Activated B cell treated with CpG ODN at 0.5 μM for 24 hours (primary cell): ENCODE measurements at regions of chr11 and their contacts with region 1.

Region 1: DNA sequence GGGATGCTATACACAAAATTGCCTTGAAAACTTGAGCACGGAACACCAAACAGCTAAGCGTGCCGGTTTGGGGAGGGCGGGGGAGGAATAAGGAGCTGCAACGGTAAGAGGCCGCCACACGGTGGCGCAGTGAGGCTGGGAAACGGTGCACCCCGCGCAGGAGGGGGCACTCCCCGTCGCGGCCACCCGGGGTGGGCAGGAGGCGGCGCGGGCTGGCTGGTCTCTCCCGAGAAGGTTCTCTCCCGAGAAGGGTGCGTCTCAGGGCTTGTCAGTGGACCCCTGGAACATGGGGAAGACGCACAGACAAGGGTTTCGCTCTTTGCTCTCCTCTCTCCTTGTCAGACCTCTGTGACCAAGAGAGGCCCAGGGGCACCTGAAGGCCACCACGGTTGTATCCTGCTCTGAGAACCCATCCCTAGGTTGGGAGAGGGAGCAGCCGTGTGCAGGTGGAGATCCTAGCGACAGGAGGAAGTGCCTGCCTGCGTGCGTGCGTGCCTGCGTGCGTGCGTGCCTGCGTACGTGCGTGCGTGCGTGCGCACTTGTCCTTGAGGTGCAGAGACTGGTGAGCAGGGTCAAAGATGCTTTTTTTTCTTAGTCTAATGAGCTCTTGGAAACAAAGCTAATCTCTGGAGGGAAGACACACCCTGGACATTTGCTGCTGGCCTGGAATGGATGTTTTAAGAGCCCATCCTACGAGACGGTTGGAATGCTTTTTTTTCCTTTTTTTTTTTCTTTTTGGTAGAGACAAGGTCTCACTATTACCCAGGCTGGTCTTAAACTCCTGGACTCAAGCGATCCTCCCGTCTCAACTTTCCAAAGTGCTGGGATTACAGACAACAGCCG is 18.1 kb upstream of the JAM3 start:
- DNase-seq: peak; percentile 66
- ATAC-seq: peak; percentile 97
- H3K4me3 Mint-ChIP-seq: no peak overlapping the region
- H3K27ac Mint-ChIP-seq: no peak overlapping the region
- H3K4me1 Mint-ChIP-seq: peaks cover 2% of the 10 kb centered on the region
- H3K27me3 Mint-ChIP-seq: peaks cover 37% of the 10 kb centered on the region
- CTCF ChIP-seq: peak; percentile 70

Region 2: DNA sequence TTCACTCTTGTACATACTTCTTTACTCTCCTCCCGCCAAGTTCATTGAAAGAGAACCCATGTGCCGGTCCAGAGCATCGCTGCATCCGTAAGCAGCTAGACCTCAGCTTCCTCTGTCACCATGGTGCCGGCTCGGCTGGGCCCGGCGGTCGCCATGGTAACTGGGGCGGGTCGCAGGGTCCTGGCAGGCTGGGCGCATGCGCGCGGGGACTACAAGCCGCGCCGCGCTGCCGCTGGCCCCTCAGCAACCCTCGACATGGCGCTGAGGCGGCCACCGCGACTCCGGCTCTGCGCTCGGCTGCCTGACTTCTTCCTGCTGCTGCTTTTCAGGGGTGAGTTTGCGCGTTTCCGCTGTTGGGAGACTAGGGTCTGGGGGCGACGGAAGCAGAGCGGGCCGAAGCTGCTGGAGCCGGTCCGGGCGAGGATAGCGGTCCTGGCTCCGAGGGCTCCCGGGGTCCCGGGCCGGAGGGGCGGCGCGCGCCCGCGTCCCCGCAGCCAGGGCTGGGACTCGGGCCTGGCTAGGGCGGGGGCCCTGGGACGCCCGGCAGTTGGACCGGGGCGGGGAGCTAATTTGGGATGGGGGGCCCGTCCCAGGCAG is 18.2 kb after region 1 on chr11 and contains the start of gene JAM3:
- CTCF ChIA-PET with region 1: interaction called, 13 read pairs
- POLR2A ChIA-PET with region 1: interaction called, 5 read pairs
- intact Hi-C with region 1: loop called (anchors 1 kb)
- DNase-seq: peak; percentile 99
- ATAC-seq: peak; percentile 88
- H3K4me3 Mint-ChIP-seq: peak within 1 kb of the TSS; percentile 95
- H3K27ac Mint-ChIP-seq: peak within 1 kb of the TSS; percentile 90
- H3K4me1 Mint-ChIP-seq: peaks cover 42% of the 10 kb centered on the region
- H3K27me3 Mint-ChIP-seq: peaks cover 11% of the 10 kb centered on the region
- CTCF ChIP-seq: no peak
- total RNA-seq, gene JAM3: 16.2 and 17.6 TPM in 2 replicates

Region 3: DNA sequence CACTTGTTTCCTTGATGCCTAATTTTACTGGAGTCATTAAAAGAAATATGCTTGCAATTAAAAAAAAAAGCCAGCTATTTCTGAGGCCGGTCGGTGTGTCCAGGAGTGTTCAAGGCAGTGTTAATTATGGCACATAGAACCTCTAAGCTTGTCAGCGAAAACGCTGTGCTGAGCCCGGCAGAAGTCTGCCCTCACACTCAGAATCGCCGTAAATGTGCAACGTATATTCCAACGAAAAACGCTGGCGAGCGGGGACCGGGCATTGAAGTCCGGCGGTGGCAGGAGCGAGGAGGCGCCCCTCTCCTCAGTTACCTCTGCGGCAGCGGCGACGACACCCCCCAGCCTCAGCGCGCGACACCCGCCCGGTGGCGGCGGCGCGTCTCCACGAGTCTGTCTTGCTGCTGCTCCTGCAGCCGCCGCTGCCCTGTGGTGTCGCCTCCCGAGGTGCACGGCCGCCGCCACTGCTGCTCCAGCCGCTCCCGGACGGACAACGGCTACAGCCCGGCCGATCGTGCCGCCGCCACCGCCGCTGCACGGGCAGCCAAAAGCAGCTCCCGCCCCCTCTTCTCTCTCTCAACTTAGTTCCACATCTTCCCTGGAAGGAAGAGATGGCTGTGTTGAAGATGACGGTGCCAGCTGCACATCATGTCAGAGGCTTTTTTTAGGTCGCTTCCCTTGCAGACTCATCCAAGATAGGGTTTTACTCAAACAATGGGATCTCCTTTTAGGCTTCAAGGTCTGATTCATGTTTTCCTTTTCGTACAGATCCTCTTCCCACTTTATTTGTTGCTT is 74.1 kb after region 1 on chr11:
- CTCF ChIA-PET with region 1: interaction called, 4 read pairs
- POLR2A ChIA-PET with region 1: no interaction called
- intact Hi-C with region 1: loop called (anchors 1 kb)
- DNase-seq: no peak
- ATAC-seq: no peak
- H3K4me3 Mint-ChIP-seq: no peak overlapping the region
- H3K27ac Mint-ChIP-seq: no peak overlapping the region
- H3K4me1 Mint-ChIP-seq: peaks cover 20% of the 10 kb centered on the region
- H3K27me3 Mint-ChIP-seq: peaks cover 17% of the 10 kb centered on the region
- CTCF ChIP-seq: no peak

Region 4: DNA sequence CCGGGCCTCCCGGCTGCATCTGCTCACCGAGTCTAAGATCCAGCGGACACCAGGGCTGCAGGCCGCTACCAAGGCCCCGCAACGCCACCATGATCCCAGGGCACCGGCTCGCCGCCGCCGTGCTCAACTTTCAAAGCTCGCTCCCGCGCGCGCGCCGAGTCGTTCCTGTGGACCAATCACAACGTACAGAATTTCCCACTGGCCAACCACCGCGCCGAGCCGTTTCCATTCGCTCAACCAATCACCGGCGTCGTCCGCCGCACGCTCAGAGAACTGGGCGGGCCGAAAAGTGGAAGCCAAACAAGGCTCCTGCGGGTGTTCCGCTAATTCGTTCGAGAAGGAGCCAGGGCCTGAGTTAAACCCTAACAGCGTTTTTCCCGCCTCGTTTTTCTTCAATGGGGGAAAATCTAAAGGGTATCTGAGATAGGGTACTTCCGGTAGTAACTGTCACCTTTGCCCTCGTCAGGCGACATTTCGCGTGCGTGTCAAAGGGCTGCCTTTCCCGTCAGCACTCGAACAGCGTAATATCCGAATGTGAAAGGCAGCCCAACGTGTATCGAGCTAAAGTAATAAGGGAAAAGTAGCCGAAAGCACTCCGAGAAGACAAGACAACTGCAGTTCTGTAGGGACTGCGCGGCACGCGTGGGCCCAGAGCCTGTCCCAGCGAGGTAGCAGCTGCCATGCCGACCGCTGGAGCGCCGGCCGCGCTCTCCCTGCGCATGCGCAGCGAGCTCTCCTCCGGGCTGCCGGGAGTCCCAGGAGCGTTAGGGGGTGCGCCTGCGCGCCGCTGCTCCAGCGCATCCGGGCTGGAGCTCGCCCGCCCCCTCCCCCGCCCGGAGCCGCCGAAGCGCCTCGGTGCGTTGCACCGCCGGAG is 173.3 kb after region 1 on chr11 and contains the starts of genes NCAPD3 and VPS26B:
- CTCF ChIA-PET with region 1: no interaction called
- POLR2A ChIA-PET with region 1: no interaction called
- intact Hi-C with region 1: loop called (anchors 5 kb)
- DNase-seq: peak; percentile 89
- ATAC-seq: peak; percentile 80
- H3K4me3 Mint-ChIP-seq: peak within 1 kb of the TSS; percentile 93
- H3K27ac Mint-ChIP-seq: peak within 1 kb of the TSS; percentile 97
- H3K4me1 Mint-ChIP-seq: peaks cover 45% of the 10 kb centered on the region
- H3K27me3 Mint-ChIP-seq: peaks cover 7% of the 10 kb centered on the region
- CTCF ChIP-seq: no peak
- total RNA-seq, gene NCAPD3: 22.2 and 22.7 TPM in 2 replicates
- total RNA-seq, gene VPS26B: 8.9 and 11.4 TPM in 2 replicates